ENCODE measurements at regions of chr2 and their contacts with region 1.

Region 1: GRCh38 chr2:118088051-118089024 is at the start of gene INSIG2:
- DNase-seq: peak; percentile 91
- H3K4me3 Mint-ChIP-seq: peak within 1 kb of the TSS; percentile 93
- H3K27ac Mint-ChIP-seq: peak within 1 kb of the TSS; percentile 92
- H3K4me1 Mint-ChIP-seq: peaks cover 17% of the 10 kb centered on the region
- H3K27me3 Mint-ChIP-seq: peaks cover 12% of the 10 kb centered on the region
- total RNA-seq, gene INSIG2: 48.4 and 51.6 TPM in 2 replicates

Region 2: GRCh38 chr2:117918608-117919007 is 169.7 kb before region 1 on chr2:
- intact Hi-C with region 1: no loop called
- DNase-seq: no peak
- H3K4me3 Mint-ChIP-seq: no peak overlapping the region
- H3K27ac Mint-ChIP-seq: no peak overlapping the region
- H3K4me1 Mint-ChIP-seq: no peaks in the 10 kb centered on the region
- H3K27me3 Mint-ChIP-seq: no peaks in the 10 kb centered on the region

Region 3: GRCh38 chr2:118013724-118014491 is 74.4 kb before region 1 on chr2 and contains the start of gene CCDC93:
- intact Hi-C with region 1: loop called (anchors 1 kb)
- DNase-seq: peak; percentile 85
- H3K4me3 Mint-ChIP-seq: peak within 1 kb of the TSS; percentile 92
- H3K27ac Mint-ChIP-seq: peak within 1 kb of the TSS; percentile 85
- H3K4me1 Mint-ChIP-seq: peaks cover 34% of the 10 kb centered on the region
- H3K27me3 Mint-ChIP-seq: peaks cover 5% of the 10 kb centered on the region
- total RNA-seq, gene CCDC93: 33.8 and 37.0 TPM in 2 replicates

Region 4: GRCh38 chr2:118061135-118061955 is 27.0 kb before region 1 on chr2:
- intact Hi-C with region 1: loop called (anchors 2 kb)
- DNase-seq: no peak
- H3K4me3 Mint-ChIP-seq: no peak overlapping the region
- H3K27ac Mint-ChIP-seq: no peak overlapping the region
- H3K4me1 Mint-ChIP-seq: peaks cover 7% of the 10 kb centered on the region
- H3K27me3 Mint-ChIP-seq: peaks cover 38% of the 10 kb centered on the region

Region 5: DNA sequence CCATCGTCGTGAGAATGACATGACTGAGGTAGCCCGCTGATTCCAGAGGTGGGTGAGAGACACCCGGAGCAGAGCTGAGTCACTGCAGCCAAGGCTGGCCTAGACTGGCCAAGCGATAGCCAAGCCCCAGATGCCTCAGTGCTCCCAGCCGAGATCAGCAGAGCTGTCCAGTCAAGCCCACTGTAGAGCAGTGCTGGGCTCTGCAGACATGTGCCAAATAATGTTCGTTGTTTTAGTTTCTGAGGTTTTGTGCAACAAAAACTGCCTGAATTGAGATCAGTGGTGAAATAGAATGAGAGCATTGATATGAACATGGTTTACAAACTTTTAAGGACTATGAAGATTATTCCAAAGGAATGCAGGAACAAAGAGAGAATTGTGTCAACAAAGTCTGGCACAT is 42.0 kb after region 1 on chr2:
- intact Hi-C with region 1: loop called (anchors 1 kb)
- DNase-seq: no peak
- H3K4me3 Mint-ChIP-seq: no peak overlapping the region
- H3K27ac Mint-ChIP-seq: peak overlapping the region; percentile 60
- H3K4me1 Mint-ChIP-seq: peaks cover 21% of the 10 kb centered on the region
- H3K27me3 Mint-ChIP-seq: peaks cover 17% of the 10 kb centered on the region

Region 6: GRCh38 chr2:118309946-118310680 is 221.8 kb after region 1 on chr2:
- intact Hi-C with region 1: loop called (anchors 2 kb)
- DNase-seq: peak; percentile 71
- H3K4me3 Mint-ChIP-seq: peak overlapping the region; percentile 79
- H3K27ac Mint-ChIP-seq: peak overlapping the region; percentile 93
- H3K4me1 Mint-ChIP-seq: peaks cover 4% of the 10 kb centered on the region
- H3K27me3 Mint-ChIP-seq: peaks cover 29% of the 10 kb centered on the region